ENCODE measurements at regions of chr10 and their contacts with region 1.

Region 1: DNA sequence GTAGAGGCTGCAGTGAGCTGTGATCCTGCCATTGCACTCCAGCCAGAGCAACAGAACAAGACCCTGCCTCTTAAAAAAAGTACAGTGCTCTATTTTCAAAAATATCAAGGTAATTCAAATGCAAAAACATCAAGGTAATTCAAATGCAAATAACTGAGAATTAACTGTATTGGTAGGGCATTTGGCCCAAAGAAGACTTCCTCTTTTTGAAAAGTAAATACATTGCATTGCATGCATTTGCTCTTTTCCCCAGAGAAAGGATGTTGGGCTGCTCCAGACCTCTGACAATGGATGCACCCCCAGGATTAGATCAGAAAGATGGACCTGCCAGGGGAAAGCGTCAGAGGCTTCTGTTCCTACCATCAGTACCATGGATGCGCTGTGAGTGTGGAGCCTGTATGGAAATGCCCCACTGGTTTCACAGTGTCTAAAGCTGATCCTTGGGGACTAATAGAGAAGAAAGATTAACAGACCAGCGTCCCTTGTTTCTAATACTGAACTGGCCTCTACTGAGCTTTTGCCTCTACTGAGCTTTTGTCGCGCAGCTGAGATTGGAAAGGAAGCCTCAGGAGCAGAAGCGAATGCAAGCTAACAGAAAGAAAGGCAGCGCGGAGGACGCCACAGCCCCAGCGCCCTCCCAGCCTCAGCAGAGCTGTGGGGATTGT is 93.5 kb upstream of the LYZL2 start:
- DNase-seq: peak; percentile 60
- H3K4me3 ChIP-seq: peak overlapping the region; percentile 40
- H3K27ac ChIP-seq: peak overlapping the region; percentile 65
- H3K4me1 ChIP-seq: peaks cover 70% of the 10 kb centered on the region
- CTCF ChIP-seq: no peak

Region 2: DNA sequence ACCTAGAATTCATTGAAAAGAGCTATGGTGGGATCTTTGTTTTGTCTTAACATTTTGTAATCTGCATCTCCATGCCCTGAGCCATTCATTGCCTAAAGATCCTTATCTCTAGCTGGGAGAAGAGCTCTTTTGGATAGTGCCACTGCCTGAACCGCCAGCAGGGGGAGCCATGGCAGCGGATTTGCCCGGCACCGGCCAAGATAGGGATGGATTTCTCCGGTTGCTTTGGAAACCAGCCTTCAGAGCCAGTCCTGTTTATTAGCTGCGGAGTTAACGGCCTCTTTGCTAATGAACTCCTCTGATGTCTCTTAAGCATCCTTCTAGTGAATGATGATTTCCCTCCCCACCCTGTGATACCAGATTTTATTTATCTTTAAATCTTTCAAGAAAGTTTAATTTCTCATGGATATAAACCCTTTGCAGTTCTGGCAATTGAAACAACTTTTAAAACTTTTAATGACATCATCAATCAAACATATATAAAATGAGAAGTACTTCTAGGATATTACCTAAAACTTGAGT is 35.3 kb before region 1 on chr10:
- CTCF ChIA-PET with region 1: interaction called, 4 read pairs
- POLR2A ChIA-PET with region 1: interaction called, 6 read pairs
- intact Hi-C with region 1: loop called (anchors 1 kb)
- DNase-seq: peak; percentile 81
- H3K4me3 ChIP-seq: no peak overlapping the region
- H3K27ac ChIP-seq: no peak overlapping the region
- H3K4me1 ChIP-seq: peaks cover 21% of the 10 kb centered on the region
- CTCF ChIP-seq: peak; percentile 99

Region 3: GRCh38 chr10:31759799-31760626 is 1036.9 kb after region 1 on chr10:
- CTCF ChIA-PET with region 1: no interaction called
- POLR2A ChIA-PET with region 1: no interaction called
- intact Hi-C with region 1: loop called (anchors 5 kb)
- DNase-seq: peak; percentile 98
- H3K4me3 ChIP-seq: peak overlapping the region; percentile 80
- H3K27ac ChIP-seq: peak overlapping the region; percentile 42
- H3K4me1 ChIP-seq: peaks cover 8% of the 10 kb centered on the region
- CTCF ChIP-seq: no peak

Region 4: GRCh38 chr10:31808258-31809218 is 1085.5 kb after region 1 on chr10:
- CTCF ChIA-PET with region 1: no interaction called
- POLR2A ChIA-PET with region 1: no interaction called
- intact Hi-C with region 1: loop called (anchors 2 kb)
- DNase-seq: peak; percentile 59
- H3K4me3 ChIP-seq: no peak overlapping the region
- H3K27ac ChIP-seq: no peak overlapping the region
- H3K4me1 ChIP-seq: no peaks in the 10 kb centered on the region
- CTCF ChIP-seq: peak; percentile 89

Measured in OCI-LY7 (cell line).